ENCODE measurements at regions of chr12 and their contacts with region 1.

Region 1: GRCh38 chr12:56645717-56646446 is at the start of gene ATP5F1B:
- DNase-seq: peak; percentile 97
- total RNA-seq, gene ATP5F1B: 363 to 368 TPM

Region 2: GRCh38 chr12:56604355-56604754 is 41.5 kb before region 1 on chr12:
- intact Hi-C with region 1: no loop called
- DNase-seq: no peak

Region 3: DNA sequence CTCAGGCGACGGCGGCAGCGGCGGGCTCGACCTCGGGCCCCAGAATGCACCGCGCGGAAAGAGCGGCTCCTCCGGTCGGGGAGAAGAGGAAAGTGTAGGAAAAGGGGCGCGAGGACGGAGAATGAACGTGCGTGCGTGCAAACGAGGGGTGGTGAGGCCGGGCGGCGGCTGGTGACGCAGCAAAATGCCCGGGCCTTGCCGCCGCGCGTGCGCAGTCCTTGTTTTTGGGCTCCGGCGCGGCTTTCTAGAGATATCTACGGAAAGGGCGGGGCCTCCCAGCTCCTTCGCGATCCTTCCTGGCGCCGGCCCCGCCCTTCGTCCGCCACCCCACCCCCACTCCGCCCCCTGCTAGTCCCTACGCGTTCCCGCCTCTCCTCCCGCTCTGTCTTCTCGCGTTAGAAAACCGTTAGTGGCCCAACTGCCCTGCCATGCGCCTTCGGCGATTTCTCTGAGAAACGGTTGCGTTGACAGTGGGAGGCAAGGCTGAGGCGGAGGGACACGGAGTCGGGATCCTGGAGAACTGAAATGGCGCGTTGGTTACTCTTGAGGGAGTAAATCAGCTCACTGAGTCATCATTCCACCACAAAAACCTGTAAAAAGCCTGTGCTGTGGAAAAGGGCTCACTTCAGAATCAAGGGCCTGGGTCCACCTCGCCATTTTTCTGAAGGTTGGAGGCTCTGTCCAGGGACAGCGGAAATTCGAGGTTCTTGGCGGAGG is 42.4 kb after region 1 on chr12 and contains the start of gene PTGES3:
- intact Hi-C with region 1: loop called in 1 of 2 experiments (anchors 5 kb)
- DNase-seq: peak; percentile 100
- total RNA-seq, gene PTGES3: 132 to 145 TPM

Region 4: GRCh38 chr12:56720731-56721151 is 74.9 kb after region 1 on chr12:
- intact Hi-C with region 1: no loop called
- DNase-seq: no peak

Measured in posterior vena cava (tissue), 2 donors.